ENCODE measurements at regions of chr10 and their contacts with region 1.

Region 1: GRCh38 chr10:19828278-19829049 is 12.2 kb downstream of the PLXDC2 start:
- DNase-seq: peak; percentile 42
- H3K4me3 Mint-ChIP-seq: no peak overlapping the region
- H3K27ac Mint-ChIP-seq: peak overlapping the region; percentile 78
- H3K4me1 Mint-ChIP-seq: peaks cover 27% of the 10 kb centered on the region
- H3K27me3 Mint-ChIP-seq: no peaks in the 10 kb centered on the region
- CTCF ChIP-seq: no peak

Region 2: GRCh38 chr10:19847321-19847720 is 18.9 kb after region 1 on chr10:
- CTCF ChIA-PET with region 1: interaction called, 6 read pairs
- POLR2A ChIA-PET with region 1: interaction called, 12 read pairs
- intact Hi-C with region 1: no loop called
- DNase-seq: peak; percentile 84
- H3K4me3 Mint-ChIP-seq: peak overlapping the region; percentile 53
- H3K27ac Mint-ChIP-seq: peak overlapping the region; percentile 65
- H3K4me1 Mint-ChIP-seq: peaks cover 34% of the 10 kb centered on the region
- H3K27me3 Mint-ChIP-seq: no peaks in the 10 kb centered on the region
- CTCF ChIP-seq: no peak